PC-9 (cell line): ENCODE measurements at regions of chr11 and their contacts with region 1.

Region 1: DNA sequence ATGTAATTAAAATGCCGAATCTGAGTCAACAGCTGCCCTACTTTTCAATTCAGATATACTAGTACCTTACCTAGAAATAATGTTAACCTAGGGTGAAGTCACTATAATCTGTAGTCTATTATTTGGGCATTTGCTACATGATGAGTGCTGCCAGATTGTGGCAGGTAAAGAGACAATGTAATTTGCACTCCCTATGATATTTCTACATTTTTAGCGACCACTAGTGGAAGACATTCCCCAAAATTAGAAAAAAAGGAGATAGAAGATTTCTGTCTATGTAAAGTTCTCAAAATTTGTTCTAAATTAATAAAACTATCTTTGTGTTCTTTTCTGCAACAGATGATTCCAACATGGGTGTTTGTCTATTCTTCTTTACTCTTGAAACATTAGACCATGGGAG is 14.1 kb downstream of the MS4A1 start:
- DNase-seq: no peak
- H3K4me3 ChIP-seq: no peak overlapping the region
- H3K27ac ChIP-seq: no peak overlapping the region
- H3K4me1 ChIP-seq: no peaks in the 10 kb centered on the region
- H3K27me3 ChIP-seq: no peaks in the 10 kb centered on the region
- CTCF ChIP-seq: no peak

Region 2: GRCh38 chr11:60145677-60146076 is 324.0 kb before region 1 on chr11:
- CTCF ChIA-PET with region 1: no interaction called
- POLR2A ChIA-PET with region 1: no interaction called
- intact Hi-C with region 1: no loop called
- DNase-seq: no peak
- H3K4me3 ChIP-seq: no peak overlapping the region
- H3K27ac ChIP-seq: no peak overlapping the region
- H3K4me1 ChIP-seq: no peaks in the 10 kb centered on the region
- H3K27me3 ChIP-seq: no peaks in the 10 kb centered on the region
- CTCF ChIP-seq: no peak

Region 3: GRCh38 chr11:60280412-60280811 is 189.3 kb before region 1 on chr11 and contains the start of gene MS4A4A:
- CTCF ChIA-PET with region 1: no interaction called
- POLR2A ChIA-PET with region 1: no interaction called
- intact Hi-C with region 1: no loop called
- DNase-seq: no peak
- H3K4me3 ChIP-seq: no peak within 1 kb of the TSS
- H3K27ac ChIP-seq: no peak within 1 kb of the TSS
- H3K4me1 ChIP-seq: no peaks in the 10 kb centered on the region
- H3K27me3 ChIP-seq: no peaks in the 10 kb centered on the region
- CTCF ChIP-seq: no peak
- total RNA-seq, gene MS4A4A: not detected in 2 replicates

Region 4: GRCh38 chr11:60420015-60420414 is 49.7 kb before region 1 on chr11:
- CTCF ChIA-PET with region 1: no interaction called
- POLR2A ChIA-PET with region 1: no interaction called
- intact Hi-C with region 1: loop called (anchors 10 kb)
- DNase-seq: no peak
- H3K4me3 ChIP-seq: no peak overlapping the region
- H3K27ac ChIP-seq: no peak overlapping the region
- H3K4me1 ChIP-seq: no peaks in the 10 kb centered on the region
- H3K27me3 ChIP-seq: 0 out of 2 replicates have a peak, but pooled peaks cover 10% of the 10 kb centered on the region
- CTCF ChIP-seq: no peak

Region 5: GRCh38 chr11:60831143-60831500 is 361.4 kb after region 1 on chr11:
- CTCF ChIA-PET with region 1: no interaction called
- POLR2A ChIA-PET with region 1: no interaction called
- intact Hi-C with region 1: no loop called
- DNase-seq: peak; percentile 74 to 88
- H3K4me3 ChIP-seq: no peak overlapping the region
- H3K27ac ChIP-seq: no peak overlapping the region
- H3K4me1 ChIP-seq: 0 out of 2 replicates have a peak, but pooled peaks cover 3% of the 10 kb centered on the region
- H3K27me3 ChIP-seq: peaks cover 17% of the 10 kb centered on the region; the same call in 1 of the 2 replicates
- CTCF ChIP-seq: peak; percentile 99